Activated CD8-positive, alpha-beta memory T cell treated with anti-CD3 and anti-CD28 coated beads, Interleukin-2, amount 10 ng/mL, durations not matched to agents 7 days and 5 days (primary cell): ENCODE measurements at regions of chr15 and their contacts with region 1.

Region 1: GRCh38 chr15:59917504-59918157 is 86.5 kb upstream of the FOXB1 start:
- DNase-seq: peak; percentile 90
- ATAC-seq: peak; percentile 65
- H3K4me3 Mint-ChIP-seq: no peak overlapping the region
- H3K27ac Mint-ChIP-seq: peak overlapping the region; percentile 45
- H3K4me1 Mint-ChIP-seq: peaks cover 36% of the 10 kb centered on the region
- H3K27me3 Mint-ChIP-seq: peaks cover 25% of the 10 kb centered on the region

Region 2: GRCh38 chr15:59725172-59725486 is 192.5 kb before region 1 on chr15:
- CTCF ChIA-PET with region 1: interaction called, 14 read pairs
- DNase-seq: no peak
- ATAC-seq: no peak
- H3K4me3 Mint-ChIP-seq: no peak overlapping the region
- H3K27ac Mint-ChIP-seq: no peak overlapping the region
- H3K4me1 Mint-ChIP-seq: peaks cover 2% of the 10 kb centered on the region
- H3K27me3 Mint-ChIP-seq: peaks cover 23% of the 10 kb centered on the region

Region 3: DNA sequence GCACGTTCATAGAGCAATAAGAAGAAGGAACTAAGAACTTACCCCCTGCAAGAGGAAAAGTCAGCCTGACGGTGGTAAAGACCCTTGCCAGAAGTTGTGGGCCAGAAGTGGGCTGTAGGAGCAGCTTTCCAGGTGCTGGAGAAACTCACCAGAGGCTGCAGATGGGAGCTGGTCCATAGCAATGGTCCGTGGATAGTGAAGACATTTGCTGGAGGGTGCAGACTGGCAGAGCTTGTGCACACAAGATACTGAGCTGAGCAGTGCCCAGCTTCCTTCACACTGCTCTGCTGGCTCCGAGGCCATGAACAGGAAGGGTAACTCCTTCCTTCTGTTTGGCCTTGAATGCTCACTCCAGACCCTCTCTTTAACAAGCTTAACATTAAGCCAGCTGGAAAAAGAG is 78.7 kb before region 1 on chr15:
- CTCF ChIA-PET with region 1: no interaction called
- DNase-seq: no peak
- ATAC-seq: peak; percentile 12
- H3K4me3 Mint-ChIP-seq: no peak overlapping the region
- H3K27ac Mint-ChIP-seq: peak overlapping the region; percentile 73
- H3K4me1 Mint-ChIP-seq: peaks cover 44% of the 10 kb centered on the region
- H3K27me3 Mint-ChIP-seq: peaks cover 14% of the 10 kb centered on the region

Region 4: GRCh38 chr15:59976480-59977271 is 59.0 kb after region 1 on chr15:
- CTCF ChIA-PET with region 1: interaction called, 17 read pairs
- DNase-seq: peak; percentile 93
- ATAC-seq: peak; percentile 97
- H3K4me3 Mint-ChIP-seq: peak overlapping the region; percentile 51
- H3K27ac Mint-ChIP-seq: peak overlapping the region; percentile 90
- H3K4me1 Mint-ChIP-seq: peaks cover 29% of the 10 kb centered on the region
- H3K27me3 Mint-ChIP-seq: peaks cover 20% of the 10 kb centered on the region

Region 5: DNA sequence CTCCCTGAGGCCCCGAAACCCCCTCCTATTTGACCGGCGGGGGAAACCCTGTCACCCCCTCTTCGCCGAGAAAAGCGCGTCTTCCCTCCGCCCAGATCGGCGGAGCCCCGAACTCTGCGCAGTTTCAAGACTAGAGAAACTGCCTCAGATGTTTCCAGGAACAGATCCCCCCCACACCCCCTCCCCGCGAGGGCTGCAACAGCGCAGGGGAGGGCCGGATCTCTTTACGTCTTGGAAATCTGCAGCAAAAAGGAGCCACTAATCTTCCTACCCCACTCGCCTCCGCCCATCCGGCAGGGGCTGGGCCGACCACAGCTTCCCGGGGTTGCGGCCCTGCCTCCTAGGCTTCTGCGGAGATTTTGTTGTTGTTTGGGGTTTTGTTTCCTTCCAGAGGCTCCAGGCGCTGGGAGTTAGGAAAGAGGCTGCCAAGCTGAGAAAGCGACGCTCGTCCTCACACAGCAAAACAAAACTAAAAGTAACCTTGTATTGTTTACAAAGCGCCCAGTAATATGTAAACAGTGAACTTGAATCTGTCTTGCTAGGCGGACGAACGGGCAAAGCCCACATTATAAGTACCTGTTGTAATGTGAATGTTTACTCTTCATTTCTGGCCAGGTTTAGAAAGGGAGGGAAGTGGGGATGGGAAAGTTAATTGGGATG is 88.7 kb after region 1 on chr15:
- CTCF ChIA-PET with region 1: interaction called, 29 read pairs
- DNase-seq: peak; percentile 91
- ATAC-seq: peak; percentile 71
- H3K4me3 Mint-ChIP-seq: peak overlapping the region; percentile 94
- H3K27ac Mint-ChIP-seq: peak overlapping the region; percentile 94
- H3K4me1 Mint-ChIP-seq: peaks cover 39% of the 10 kb centered on the region
- H3K27me3 Mint-ChIP-seq: peaks cover 79% of the 10 kb centered on the region

Region 6: DNA sequence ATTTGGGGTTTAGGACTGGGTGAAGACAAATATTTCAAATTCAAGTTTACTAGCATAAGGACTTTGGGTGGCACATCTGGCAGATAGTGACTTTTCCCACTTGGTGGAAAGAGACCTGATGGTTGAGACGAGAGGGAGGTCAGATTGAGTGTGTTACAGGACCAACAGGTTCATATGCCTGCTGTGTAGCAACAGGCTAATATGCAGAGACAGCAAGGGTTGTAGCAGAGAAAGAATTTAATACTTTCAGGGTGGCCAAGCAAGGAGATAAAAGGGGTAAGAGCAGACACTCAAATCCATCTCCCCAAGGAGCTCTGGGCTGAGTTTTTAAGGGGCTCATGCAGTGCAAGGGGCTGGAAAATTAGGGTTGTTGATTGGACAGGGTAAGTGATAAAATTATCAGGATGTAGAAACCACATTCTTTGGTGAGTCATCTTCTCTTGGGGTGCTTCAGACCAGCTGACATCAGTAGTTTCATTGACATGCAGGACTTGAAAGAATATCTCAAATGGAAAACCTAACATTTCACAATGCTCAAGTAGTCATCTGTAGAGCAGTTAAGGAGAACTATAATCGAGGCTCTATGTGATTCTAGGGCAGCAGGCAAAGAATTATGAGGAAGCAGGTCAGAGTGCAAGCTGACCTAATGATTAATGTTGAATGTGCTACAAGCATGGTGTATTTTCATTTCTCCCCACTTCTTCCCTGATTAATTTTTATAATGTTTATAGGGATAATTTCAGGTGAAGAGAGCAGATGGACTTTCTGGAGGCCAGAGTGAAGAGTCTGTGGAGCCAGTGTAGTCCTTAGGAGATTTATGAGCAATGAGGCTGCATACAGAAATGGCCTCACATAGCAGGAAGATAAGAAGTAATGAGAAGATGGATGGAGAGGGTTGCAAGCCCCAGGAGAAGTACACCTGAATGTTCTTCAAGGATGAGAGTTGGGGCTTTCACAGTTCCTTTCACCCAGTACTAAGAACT is 100.2 kb after region 1 on chr15:
- CTCF ChIA-PET with region 1: no interaction called
- DNase-seq: peak; percentile 52
- ATAC-seq: peak; percentile 89
- H3K4me3 Mint-ChIP-seq: no peak overlapping the region
- H3K27ac Mint-ChIP-seq: peak overlapping the region; percentile 62
- H3K4me1 Mint-ChIP-seq: peaks cover 29% of the 10 kb centered on the region
- H3K27me3 Mint-ChIP-seq: peaks cover 39% of the 10 kb centered on the region

Region 7: GRCh38 chr15:60179786-60180391 is 262.3 kb after region 1 on chr15:
- CTCF ChIA-PET with region 1: interaction called, 32 read pairs
- DNase-seq: peak; percentile 51
- ATAC-seq: peak; percentile 57
- H3K4me3 Mint-ChIP-seq: no peak overlapping the region
- H3K27ac Mint-ChIP-seq: no peak overlapping the region
- H3K4me1 Mint-ChIP-seq: no peaks in the 10 kb centered on the region
- H3K27me3 Mint-ChIP-seq: peaks cover 49% of the 10 kb centered on the region